SK-N-SH (cell line): ENCODE measurements at regions of chr2 and their contacts with region 1.

Region 1: DNA sequence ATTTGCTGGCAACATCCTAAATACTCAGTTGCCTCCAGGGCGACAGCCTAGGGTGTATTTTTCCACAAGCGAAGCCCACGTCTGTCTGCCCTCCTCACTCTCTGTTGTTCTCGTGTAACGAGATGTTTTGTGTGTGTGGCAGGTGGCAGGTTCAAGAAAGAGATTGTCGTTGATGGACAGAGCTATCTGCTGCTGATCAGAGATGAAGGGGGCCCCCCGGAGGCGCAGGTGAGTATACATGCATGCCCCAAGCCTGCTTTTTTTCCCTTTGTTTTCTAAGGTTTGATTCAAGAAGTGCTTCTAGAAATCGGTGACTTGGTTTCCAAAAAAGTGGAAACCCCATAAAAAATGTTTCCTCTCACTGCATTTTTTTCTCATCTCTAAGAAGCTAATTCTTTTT is 247.0 kb downstream of the AGAP1 start:
- DNase-seq: peak; percentile 61
- H3K4me3 ChIP-seq: no peak overlapping the region
- H3K27ac ChIP-seq: no peak overlapping the region
- H3K4me1 ChIP-seq: no peaks in the 10 kb centered on the region; a peak in 1 of 4 replicates
- H3K27me3 ChIP-seq: no peaks in the 10 kb centered on the region
- CTCF ChIP-seq: peak; percentile 45
- EP300 ChIP-seq: no peak
- RAD21 ChIP-seq: peak; percentile 60

Region 2: DNA sequence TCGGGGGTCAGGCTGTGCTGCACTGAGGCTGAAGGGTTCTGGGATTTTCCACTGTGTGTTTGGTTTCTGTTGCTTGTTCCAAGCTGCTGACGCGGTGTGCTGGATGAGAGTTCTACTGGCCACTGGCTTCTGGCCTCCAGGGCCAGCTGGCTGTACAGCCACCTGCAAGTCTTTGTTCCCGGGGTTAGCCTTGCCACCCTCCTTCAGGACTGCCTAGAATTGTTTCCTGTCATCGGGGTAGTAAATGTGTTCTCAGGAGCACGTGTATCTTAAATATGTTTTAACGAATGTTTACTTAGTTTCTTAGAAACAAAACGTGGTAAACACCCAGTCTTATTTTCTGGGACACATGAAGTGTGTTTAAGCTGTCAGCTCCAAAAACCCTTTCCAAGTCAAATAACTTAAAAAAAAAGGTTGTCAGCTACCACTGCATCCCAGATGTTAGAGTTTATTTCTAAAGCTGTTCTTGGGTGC is 15.8 kb before region 1 on chr2:
- CTCF ChIA-PET with region 1: interaction called, 22 read pairs
- POLR2A ChIA-PET with region 1: no interaction called
- DNase-seq: no peak
- H3K4me3 ChIP-seq: no peak overlapping the region
- H3K27ac ChIP-seq: no peak overlapping the region
- H3K4me1 ChIP-seq: peaks cover 0 to 47% of the 10 kb centered on the region in 2 experiments; a peak in 2 of 4 replicates
- H3K27me3 ChIP-seq: no peaks in the 10 kb centered on the region
- CTCF ChIP-seq: no peak
- EP300 ChIP-seq: no peak
- RAD21 ChIP-seq: no peak